Right lobe of liver (tissue), 6 donors: ENCODE measurements at regions of chr16 and their contacts with region 1.

Region 1: DNA sequence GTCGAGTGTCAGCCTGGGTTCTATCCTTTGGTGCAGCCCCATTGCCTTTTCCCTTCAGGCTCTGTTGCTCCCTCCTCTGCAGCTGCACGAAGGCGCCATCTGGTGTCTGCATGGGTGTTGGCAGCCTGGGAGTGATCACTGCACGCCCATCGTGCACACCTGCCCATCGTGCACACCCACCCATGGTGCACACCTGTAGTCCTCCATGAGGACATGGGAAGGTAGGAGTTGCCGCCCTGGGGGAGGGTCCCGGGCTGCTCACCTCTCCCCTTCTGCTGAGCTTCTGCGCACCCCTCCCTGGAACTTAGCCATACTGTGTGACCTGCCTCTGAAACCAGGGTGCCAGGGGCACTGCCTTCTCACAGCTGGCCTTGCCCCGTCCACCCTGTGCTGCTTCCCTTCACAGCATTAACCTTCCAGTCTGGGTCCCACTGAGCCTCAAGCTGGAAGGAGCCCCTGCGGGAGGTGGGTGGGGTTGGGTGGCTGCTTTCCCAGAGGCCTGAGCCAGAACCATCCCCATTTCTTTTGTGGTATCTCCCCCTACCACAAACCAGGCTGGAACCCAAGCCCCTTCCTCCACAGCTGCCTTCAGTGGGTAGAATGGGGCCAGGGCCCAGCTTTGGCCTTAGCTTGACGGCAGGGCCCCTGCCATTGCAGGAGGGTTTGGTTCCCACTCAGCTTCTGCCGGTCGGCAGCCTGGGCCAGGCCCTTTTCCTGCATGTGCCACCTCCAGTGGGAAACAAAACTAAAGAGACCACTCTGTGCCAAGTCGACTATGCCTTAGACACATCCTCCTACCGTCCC is 2.9 kb downstream of the CTRL start:
- DNase-seq: peak; percentile 76 to 83 (median 77)
- ATAC-seq: peak; percentile 81 to 88 (median 84)
- H3K4me3 ChIP-seq: no peak overlapping the region
- H3K27ac ChIP-seq: no peak overlapping the region
- H3K4me1 ChIP-seq: no peaks in the 10 kb centered on the region
- H3K27me3 ChIP-seq: no peaks in the 10 kb centered on the region
- CTCF ChIP-seq: peak; percentile 83 to 91 (median 88)
- POLR2A ChIP-seq: no peak

Region 2: GRCh38 chr16:67822511-67822910 is 106.3 kb before region 1 on chr16:
- intact Hi-C with region 1: loop called in 1 of 2 experiments (anchors 10 kb)
- DNase-seq: no peak
- ATAC-seq: no peak
- H3K4me3 ChIP-seq: no peak overlapping the region
- H3K27ac ChIP-seq: no peak overlapping the region
- H3K4me1 ChIP-seq: no peaks in the 10 kb centered on the region
- H3K27me3 ChIP-seq: no peaks in the 10 kb centered on the region
- CTCF ChIP-seq: no peak
- POLR2A ChIP-seq: no peak

Region 3: DNA sequence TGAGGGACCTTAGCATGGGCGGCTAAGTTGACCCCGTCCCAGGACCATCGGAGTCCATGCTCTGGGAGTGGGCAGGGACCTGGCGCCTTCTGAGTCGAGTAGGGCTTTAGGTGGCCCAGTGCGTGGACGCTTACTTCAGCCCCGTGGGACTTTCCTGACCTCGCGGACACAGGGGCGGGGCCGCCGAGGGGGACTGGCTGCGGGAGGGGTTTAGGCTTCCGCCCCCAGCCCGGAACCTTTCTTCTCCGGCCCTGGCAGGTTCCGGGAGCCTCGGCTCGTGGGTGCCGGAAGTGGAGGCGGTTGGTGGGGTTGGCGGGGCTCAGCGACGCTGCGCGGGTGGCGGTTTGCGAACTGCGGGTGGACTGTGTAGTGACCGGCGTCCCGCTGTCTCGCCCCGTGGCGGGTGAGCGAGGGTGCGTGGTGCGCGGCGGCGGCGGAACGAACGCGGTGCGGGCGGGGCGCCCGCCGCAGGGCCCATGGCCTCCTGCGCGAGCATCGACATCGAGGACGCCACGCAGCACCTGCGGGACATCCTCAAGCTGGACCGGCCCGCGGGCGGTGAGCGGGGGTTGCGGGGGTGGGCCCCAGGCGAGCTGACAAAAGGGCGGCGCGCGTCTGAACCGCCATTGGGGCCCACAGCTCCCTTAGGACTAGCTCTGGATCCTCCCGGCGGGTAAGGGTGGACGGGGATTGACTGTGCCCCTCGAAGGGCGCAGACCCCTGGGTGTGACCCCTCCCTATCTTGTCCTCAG is 55.8 kb before region 1 on chr16 and contains the start of gene EDC4:
- intact Hi-C with region 1: no loop called
- DNase-seq: peak; percentile 88 to 93 (median 91)
- ATAC-seq: peak; percentile 91 to 97 (median 94)
- H3K4me3 ChIP-seq: peak within 1 kb of the TSS; percentile 67 to 97 (median 96)
- H3K27ac ChIP-seq: peak within 1 kb of the TSS; percentile 74 to 84 (median 76)
- H3K4me1 ChIP-seq: peaks cover 0 to 35% (median 8%) of the 10 kb centered on the region in 4 donors
- H3K27me3 ChIP-seq: no peaks in the 10 kb centered on the region
- CTCF ChIP-seq: no peak
- POLR2A ChIP-seq: peak; percentile 27
- total RNA-seq, gene EDC4: 16.2 to 25.4 (median 19.5) TPM

Region 4: DNA sequence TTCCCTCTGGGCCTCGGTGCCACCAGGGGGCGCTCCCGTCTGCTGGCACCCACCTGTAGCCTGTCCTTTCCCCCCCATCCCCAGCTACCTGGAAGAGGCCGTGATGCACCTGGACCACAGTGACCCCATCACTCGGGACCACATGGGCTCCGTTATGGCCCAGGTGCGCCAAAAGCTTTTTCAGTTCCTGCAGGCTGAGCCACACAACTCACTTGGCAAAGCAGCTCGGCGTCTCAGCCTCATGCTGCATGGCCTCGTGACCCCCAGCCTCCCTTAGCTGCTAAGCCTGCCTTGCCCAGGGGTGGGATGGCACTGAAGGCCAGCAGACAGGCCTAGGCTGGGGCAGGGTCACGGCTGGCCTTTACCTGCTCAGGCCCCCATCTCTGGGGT is 44.9 kb before region 1 on chr16:
- intact Hi-C with region 1: loop called (anchors 5 kb)
- DNase-seq: peak; percentile 69 to 77 (median 70)
- ATAC-seq: peak; percentile 65 to 72 (median 70)
- H3K4me3 ChIP-seq: no peak overlapping the region
- H3K27ac ChIP-seq: no peak overlapping the region
- H3K4me1 ChIP-seq: peaks cover 0 to 11% (median 5%) of the 10 kb centered on the region in 4 donors
- H3K27me3 ChIP-seq: no peaks in the 10 kb centered on the region
- CTCF ChIP-seq: peak; percentile 81 to 96 (median 89)
- POLR2A ChIP-seq: no peak